WTC11 (cell line): ENCODE measurements at regions of chr13 and their contacts with region 1.

Region 1: GRCh38 chr13:52450012-52450792 is at the start of gene VPS36:
- DNase-seq: peak; percentile 95
- ATAC-seq: peak; percentile 75
- H3K4me3 Mint-ChIP-seq: peak within 1 kb of the TSS; percentile 94
- H3K27ac Mint-ChIP-seq: peak within 1 kb of the TSS; percentile 85
- H3K4me1 Mint-ChIP-seq: peaks cover 21% of the 10 kb centered on the region
- H3K27me3 Mint-ChIP-seq: no peaks in the 10 kb centered on the region; the same call in 1 of the 2 replicates
- CTCF ChIP-seq: peak; percentile 100
- total RNA-seq, gene VPS36: 18.0 to 21.0 TPM (median 19.2 TPM) in 3 replicates

Region 2: DNA sequence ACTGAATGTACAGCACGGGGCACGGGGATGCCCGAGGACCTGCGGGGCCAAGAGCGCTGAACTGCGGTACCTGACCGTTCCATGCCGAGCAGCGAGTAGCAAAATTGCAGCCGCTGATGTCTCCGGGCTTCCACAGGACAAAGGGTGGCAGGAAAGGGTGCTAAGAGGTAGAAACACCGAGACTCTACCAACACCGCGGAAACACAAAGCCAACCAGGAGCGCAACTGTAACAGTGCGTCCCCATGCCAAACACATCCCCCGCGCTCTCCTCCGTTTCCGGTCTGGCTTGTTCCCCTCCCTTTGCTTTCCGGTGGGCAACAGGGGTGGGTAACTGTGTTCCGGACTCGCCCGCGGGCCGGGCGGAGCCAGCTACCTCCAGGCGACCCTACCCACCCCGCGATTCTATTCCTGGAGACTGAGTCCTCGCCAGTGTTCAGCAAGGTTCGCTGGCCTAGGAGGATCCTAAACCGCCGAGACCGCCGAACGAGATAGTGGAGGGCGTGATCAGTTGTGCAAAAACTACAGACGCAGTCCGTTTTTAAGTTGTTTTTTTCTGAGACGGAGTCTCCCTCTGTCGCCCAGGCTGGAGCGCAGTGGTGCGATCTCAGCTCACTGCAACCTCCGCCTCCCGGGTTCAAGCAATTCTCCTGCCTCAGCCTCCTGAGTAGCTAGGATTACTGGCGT is 255.9 kb before region 1 on chr13:
- CTCF ChIA-PET with region 1: interaction called, 15 read pairs
- POLR2A ChIA-PET with region 1: interaction called, 3 read pairs
- DNase-seq: peak; percentile 83
- ATAC-seq: peak; percentile 85
- H3K4me3 Mint-ChIP-seq: peak overlapping the region; percentile 99
- H3K27ac Mint-ChIP-seq: peak overlapping the region; percentile 97
- H3K4me1 Mint-ChIP-seq: peaks cover 6% of the 10 kb centered on the region
- H3K27me3 Mint-ChIP-seq: peaks cover 5% of the 10 kb centered on the region
- CTCF ChIP-seq: no peak

Region 3: DNA sequence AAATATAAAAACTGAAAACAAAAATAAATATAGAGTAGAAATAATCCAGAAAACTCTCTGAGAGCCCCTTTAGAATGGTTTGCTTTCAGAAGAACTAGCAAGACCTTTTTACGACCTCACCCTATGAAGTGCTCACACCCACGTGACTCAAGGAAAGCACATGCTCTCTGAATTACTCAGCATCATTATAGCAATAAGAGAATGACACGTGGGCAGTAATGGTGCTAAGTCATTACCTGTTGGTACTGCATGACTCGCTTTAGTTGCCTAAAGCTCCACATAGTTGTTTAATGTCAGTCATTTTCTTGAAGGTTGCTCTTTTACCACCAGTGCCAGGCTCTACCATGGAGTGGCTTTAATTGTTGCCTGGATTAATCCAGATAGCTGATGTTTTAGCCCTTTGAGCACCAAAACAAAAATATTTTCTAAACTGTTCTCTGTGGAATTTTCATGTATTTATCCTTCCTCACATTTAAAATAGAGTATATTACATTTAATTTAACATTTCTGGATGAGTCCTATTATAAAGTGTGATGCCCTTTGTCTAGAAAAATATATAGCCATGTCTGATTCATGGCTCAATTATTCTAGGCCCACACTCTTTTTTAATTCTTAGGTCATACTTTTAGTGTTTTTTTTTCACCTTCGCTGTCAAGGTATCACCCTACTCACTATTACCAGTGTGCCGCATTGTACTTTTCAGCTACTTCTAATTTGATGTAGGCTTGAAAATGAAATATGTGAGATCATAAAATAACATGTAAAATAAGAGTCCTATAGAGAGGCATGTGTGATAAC is 101.0 kb before region 1 on chr13:
- CTCF ChIA-PET with region 1: interaction called, 43 read pairs
- POLR2A ChIA-PET with region 1: no interaction called
- DNase-seq: no peak
- ATAC-seq: no peak
- H3K4me3 Mint-ChIP-seq: no peak overlapping the region
- H3K27ac Mint-ChIP-seq: no peak overlapping the region
- H3K4me1 Mint-ChIP-seq: no peaks in the 10 kb centered on the region
- H3K27me3 Mint-ChIP-seq: no peaks in the 10 kb centered on the region
- CTCF ChIP-seq: no peak

Region 4: GRCh38 chr13:52405767-52406494 is 44.3 kb before region 1 on chr13 and contains the start of gene THSD1:
- CTCF ChIA-PET with region 1: interaction called, 35 read pairs
- POLR2A ChIA-PET with region 1: interaction called, 4 read pairs
- DNase-seq: peak; percentile 54
- ATAC-seq: peak; percentile 80
- H3K4me3 Mint-ChIP-seq: peak within 1 kb of the TSS; percentile 69
- H3K27ac Mint-ChIP-seq: no peak within 1 kb of the TSS
- H3K4me1 Mint-ChIP-seq: peaks cover 15% of the 10 kb centered on the region
- H3K27me3 Mint-ChIP-seq: peaks cover 45% of the 10 kb centered on the region
- CTCF ChIP-seq: no peak
- total RNA-seq, gene THSD1: 0.30 to 0.46 TPM (median 0.39 TPM) in 3 replicates

Region 5: GRCh38 chr13:52411629-52412028 is 38.6 kb before region 1 on chr13:
- CTCF ChIA-PET with region 1: interaction called, 35 read pairs
- POLR2A ChIA-PET with region 1: interaction called, 4 read pairs
- DNase-seq: no peak
- ATAC-seq: no peak
- H3K4me3 Mint-ChIP-seq: no peak overlapping the region
- H3K27ac Mint-ChIP-seq: no peak overlapping the region
- H3K4me1 Mint-ChIP-seq: no peaks in the 10 kb centered on the region
- H3K27me3 Mint-ChIP-seq: peaks cover 10% of the 10 kb centered on the region
- CTCF ChIP-seq: no peak

Region 6: GRCh38 chr13:52428295-52428694 is 21.9 kb before region 1 on chr13:
- CTCF ChIA-PET with region 1: interaction called, 18 read pairs
- POLR2A ChIA-PET with region 1: no interaction called
- DNase-seq: no peak
- ATAC-seq: no peak
- H3K4me3 Mint-ChIP-seq: no peak overlapping the region
- H3K27ac Mint-ChIP-seq: no peak overlapping the region
- H3K4me1 Mint-ChIP-seq: no peaks in the 10 kb centered on the region
- H3K27me3 Mint-ChIP-seq: no peaks in the 10 kb centered on the region
- CTCF ChIP-seq: no peak

Region 7: GRCh38 chr13:52617070-52618060 is 167.2 kb after region 1 on chr13:
- CTCF ChIA-PET with region 1: interaction called, 10 read pairs
- POLR2A ChIA-PET with region 1: interaction called, 4 read pairs
- DNase-seq: peak; percentile 85
- ATAC-seq: peak; percentile 100
- H3K4me3 Mint-ChIP-seq: peak overlapping the region; percentile 99
- H3K27ac Mint-ChIP-seq: peak overlapping the region; percentile 41; the same call in 1 of the 2 replicates
- H3K4me1 Mint-ChIP-seq: peaks cover 16% of the 10 kb centered on the region
- H3K27me3 Mint-ChIP-seq: no peaks in the 10 kb centered on the region; the same call in 1 of the 2 replicates
- CTCF ChIP-seq: no peak